ENCODE measurements at regions of chr2 and their contacts with region 1.

Region 1: GRCh38 chr2:35081001-35081621 is 1274.5 kb upstream of the CRIM1 start:
- DNase-seq: no peak
- H3K4me3 ChIP-seq: no peak overlapping the region
- H3K27ac ChIP-seq: no peak overlapping the region
- H3K4me1 ChIP-seq: no peaks in the 10 kb centered on the region
- H3K27me3 ChIP-seq: no peaks in the 10 kb centered on the region
- CTCF ChIP-seq: no peak
- EP300 ChIP-seq: no peak
- POLR2A ChIP-seq: no peak

Region 2: GRCh38 chr2:36059691-36060090 is 978.6 kb after region 1 on chr2:
- intact Hi-C with region 1: loop called in 1 of 4 experiments (anchors 10 kb)
- DNase-seq: no peak
- H3K4me3 ChIP-seq: no peak overlapping the region
- H3K27ac ChIP-seq: no peak overlapping the region
- H3K4me1 ChIP-seq: no peaks in the 10 kb centered on the region
- H3K27me3 ChIP-seq: no peaks in the 10 kb centered on the region
- CTCF ChIP-seq: no peak
- EP300 ChIP-seq: no peak
- POLR2A ChIP-seq: no peak

Measured in ovary (tissue), 10 donors.